B cell (primary cell): ENCODE measurements at regions of chr14 and their contacts with region 1.

Region 1: DNA sequence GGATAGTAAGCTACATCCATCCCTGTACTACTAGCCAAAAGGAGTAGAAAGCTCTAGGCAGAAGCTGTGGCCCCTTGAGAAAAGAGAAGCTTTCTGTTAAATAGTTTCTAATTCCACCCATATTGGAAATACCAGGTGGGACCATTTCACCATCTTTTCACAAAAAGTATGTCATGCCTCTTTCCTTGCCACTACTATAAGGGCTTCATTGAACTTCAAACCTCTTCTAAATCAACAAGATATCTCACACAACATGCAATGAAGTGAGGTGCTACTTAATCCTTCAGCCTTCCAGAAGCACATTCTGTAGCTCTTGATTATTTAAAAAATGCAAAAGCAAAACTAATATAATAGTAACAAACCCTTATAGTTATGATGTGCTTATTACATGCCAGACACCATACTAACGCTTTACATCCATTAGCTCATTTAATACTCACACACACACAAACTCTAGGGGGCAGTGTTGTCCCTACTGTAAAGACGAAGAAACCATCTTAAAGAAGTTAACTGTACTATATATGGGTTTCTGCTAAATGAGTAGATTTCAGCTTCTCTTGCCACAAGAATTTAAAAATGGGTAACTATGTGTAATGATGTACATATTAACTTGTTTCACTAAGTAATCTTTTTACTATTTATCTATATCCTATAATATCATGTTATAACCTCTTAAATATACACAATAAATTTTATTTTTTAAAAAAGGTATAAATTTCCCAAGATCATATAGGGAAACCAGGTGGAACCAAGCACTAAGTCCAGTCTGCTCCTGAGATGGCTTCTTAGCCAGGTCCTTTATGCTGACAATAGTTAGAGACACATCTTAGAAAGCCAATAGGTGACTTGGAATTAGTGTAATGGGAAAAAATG is 124.4 kb downstream of the RPS29 start:
- DNase-seq: peak; percentile 82
- ATAC-seq: peak; percentile 83
- H3K4me3 ChIP-seq: no peak overlapping the region
- H3K4me3 Mint-ChIP-seq: no peak overlapping the region
- H3K27ac ChIP-seq: no peak overlapping the region
- H3K27ac Mint-ChIP-seq: no peak overlapping the region
- H3K4me1 ChIP-seq: no peaks in the 10 kb centered on the region
- H3K4me1 Mint-ChIP-seq: no peaks in the 10 kb centered on the region
- H3K27me3 ChIP-seq: no peaks in the 10 kb centered on the region
- H3K27me3 Mint-ChIP-seq: no peaks in the 10 kb centered on the region
- CTCF ChIP-seq: peak; percentile 81

Region 2: GRCh38 chr14:48430793-48431192 is 1031.0 kb before region 1 on chr14:
- CTCF ChIA-PET with region 1: no interaction called
- POLR2A ChIA-PET with region 1: no interaction called
- intact Hi-C with region 1: no loop called
- DNase-seq: no peak
- ATAC-seq: no peak
- H3K4me3 ChIP-seq: no peak overlapping the region
- H3K4me3 Mint-ChIP-seq: no peak overlapping the region
- H3K27ac ChIP-seq: no peak overlapping the region
- H3K27ac Mint-ChIP-seq: no peak overlapping the region
- H3K4me1 ChIP-seq: no peaks in the 10 kb centered on the region
- H3K4me1 Mint-ChIP-seq: no peaks in the 10 kb centered on the region
- H3K27me3 ChIP-seq: no peaks in the 10 kb centered on the region
- H3K27me3 Mint-ChIP-seq: no peaks in the 10 kb centered on the region
- CTCF ChIP-seq: no peak

Region 3: DNA sequence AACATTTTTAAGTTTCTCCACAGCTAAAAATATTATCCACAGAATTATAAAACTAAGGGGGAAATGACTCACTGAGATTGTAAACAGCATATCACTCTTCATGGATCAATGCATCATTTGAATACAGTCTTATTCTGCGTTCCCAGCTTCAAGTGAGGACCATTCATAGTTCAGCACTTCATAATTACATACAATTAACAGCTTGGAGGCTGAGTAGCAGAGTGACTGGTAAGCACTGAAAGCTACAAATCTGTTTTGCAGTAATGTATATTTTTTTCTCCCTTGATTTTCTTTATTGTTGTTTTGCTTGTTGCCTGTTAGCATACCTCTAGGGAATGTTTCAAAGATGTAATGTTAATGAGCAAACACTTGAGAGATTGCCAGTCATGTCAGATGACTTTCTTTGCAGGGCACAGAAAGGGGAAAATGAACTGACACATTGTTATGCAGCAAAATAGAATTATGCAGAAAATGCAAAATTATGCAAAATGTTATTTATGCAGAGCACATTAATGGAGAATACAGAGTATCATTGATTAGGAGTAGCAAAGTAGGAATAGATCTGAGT is 14.1 kb before region 1 on chr14:
- CTCF ChIA-PET with region 1: interaction called, 14 read pairs
- POLR2A ChIA-PET with region 1: no interaction called
- intact Hi-C with region 1: no loop called
- DNase-seq: no peak
- ATAC-seq: no peak
- H3K4me3 ChIP-seq: no peak overlapping the region
- H3K4me3 Mint-ChIP-seq: no peak overlapping the region
- H3K27ac ChIP-seq: no peak overlapping the region
- H3K27ac Mint-ChIP-seq: no peak overlapping the region
- H3K4me1 ChIP-seq: no peaks in the 10 kb centered on the region
- H3K4me1 Mint-ChIP-seq: no peaks in the 10 kb centered on the region
- H3K27me3 ChIP-seq: peaks cover 0 to 5% (median 2%) of the 10 kb centered on the region in 4 experiments
- H3K27me3 Mint-ChIP-seq: peaks cover 31% of the 10 kb centered on the region
- CTCF ChIP-seq: no peak

Region 4: GRCh38 chr14:49497725-49498348 is 36.1 kb after region 1 on chr14:
- CTCF ChIA-PET with region 1: interaction called, 35 read pairs
- POLR2A ChIA-PET with region 1: no interaction called
- intact Hi-C with region 1: no loop called
- DNase-seq: peak; percentile 72
- ATAC-seq: peak; percentile 76
- H3K4me3 ChIP-seq: no peak overlapping the region
- H3K4me3 Mint-ChIP-seq: no peak overlapping the region
- H3K27ac ChIP-seq: no peak overlapping the region
- H3K27ac Mint-ChIP-seq: no peak overlapping the region
- H3K4me1 ChIP-seq: no peaks in the 10 kb centered on the region
- H3K4me1 Mint-ChIP-seq: no peaks in the 10 kb centered on the region
- H3K27me3 ChIP-seq: peaks cover 0 to 2% (median 0%) of the 10 kb centered on the region in 4 experiments
- H3K27me3 Mint-ChIP-seq: peaks cover 30% of the 10 kb centered on the region
- CTCF ChIP-seq: peak; percentile 99

Region 5: DNA sequence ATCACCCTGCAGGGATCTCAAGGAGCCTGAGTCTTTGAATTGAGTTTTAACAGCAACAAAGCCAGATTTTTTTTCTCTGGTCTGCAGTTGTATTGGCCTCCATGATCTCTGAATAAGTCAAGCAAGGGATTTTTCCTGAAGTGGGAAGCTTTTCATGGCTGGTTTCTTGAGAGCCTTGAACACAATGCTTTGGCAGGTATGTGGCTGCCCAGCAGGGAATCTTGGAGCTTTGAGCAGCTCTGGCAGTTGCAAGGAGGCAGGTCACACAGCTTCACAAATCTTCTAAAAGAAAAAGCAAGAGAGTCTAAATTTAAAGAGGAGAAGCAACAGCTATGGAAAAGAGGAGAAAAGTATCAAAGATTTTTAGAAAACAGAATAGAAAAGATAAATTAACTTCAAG is 64.3 kb after region 1 on chr14:
- CTCF ChIA-PET with region 1: no interaction called
- POLR2A ChIA-PET with region 1: no interaction called
- intact Hi-C with region 1: no loop called
- DNase-seq: no peak
- ATAC-seq: no peak
- H3K4me3 ChIP-seq: no peak overlapping the region
- H3K4me3 Mint-ChIP-seq: no peak overlapping the region
- H3K27ac ChIP-seq: no peak overlapping the region
- H3K27ac Mint-ChIP-seq: no peak overlapping the region
- H3K4me1 ChIP-seq: no peaks in the 10 kb centered on the region
- H3K4me1 Mint-ChIP-seq: no peaks in the 10 kb centered on the region
- H3K27me3 ChIP-seq: peaks cover 0 to 8% (median 0%) of the 10 kb centered on the region in 4 experiments
- H3K27me3 Mint-ChIP-seq: peaks cover 49% of the 10 kb centered on the region
- CTCF ChIP-seq: no peak

Region 6: GRCh38 chr14:49585803-49586672 is 124.3 kb after region 1 on chr14 and contains the start of gene RPS29:
- CTCF ChIA-PET with region 1: interaction called, 8 read pairs
- POLR2A ChIA-PET with region 1: no interaction called
- intact Hi-C with region 1: loop called (anchors 5 kb)
- DNase-seq: peak; percentile 100
- ATAC-seq: peak; percentile 86
- H3K4me3 ChIP-seq: peak within 1 kb of the TSS; percentile 70 to 100 (median 88)
- H3K4me3 Mint-ChIP-seq: peak within 1 kb of the TSS; percentile 88
- H3K27ac ChIP-seq: peak within 1 kb of the TSS; percentile 88 to 95
- H3K27ac Mint-ChIP-seq: peak within 1 kb of the TSS; percentile 100
- H3K4me1 ChIP-seq: peaks cover 17 to 24% of the 10 kb centered on the region in 2 donors
- H3K4me1 Mint-ChIP-seq: peaks cover 46% of the 10 kb centered on the region
- H3K27me3 ChIP-seq: no peaks in the 10 kb centered on the region
- H3K27me3 Mint-ChIP-seq: no peaks in the 10 kb centered on the region
- CTCF ChIP-seq: no peak
- total RNA-seq, gene RPS29: 2,497 and 2,873 TPM in 2 replicates

Region 7: DNA sequence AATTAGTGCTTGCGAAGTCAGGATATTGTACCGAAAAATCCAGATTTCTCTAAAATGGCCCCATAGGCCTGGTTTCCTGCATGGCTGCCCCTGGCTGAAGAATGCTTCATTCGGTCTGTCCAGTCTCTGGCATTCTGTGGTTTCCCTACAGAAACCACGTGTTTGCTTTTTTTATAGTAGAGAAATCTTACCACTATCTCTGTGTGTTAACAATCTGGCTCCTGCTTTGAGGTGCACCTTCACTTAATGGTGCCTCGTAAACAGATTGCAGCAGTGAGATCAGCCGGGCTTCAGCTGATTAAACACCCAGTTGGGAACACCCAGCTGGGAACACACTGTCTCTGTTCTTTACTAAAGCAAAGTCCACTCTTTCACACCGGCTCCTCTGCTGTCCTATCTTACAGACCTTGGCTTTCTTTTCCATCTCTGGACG is 179.9 kb after region 1 on chr14:
- CTCF ChIA-PET with region 1: no interaction called
- POLR2A ChIA-PET with region 1: no interaction called
- intact Hi-C with region 1: no loop called
- DNase-seq: no peak
- ATAC-seq: no peak
- H3K4me3 ChIP-seq: no peak overlapping the region
- H3K4me3 Mint-ChIP-seq: no peak overlapping the region
- H3K27ac ChIP-seq: peak overlapping the region in 1 of 2 donors; percentile 46
- H3K27ac Mint-ChIP-seq: peak overlapping the region; percentile 2
- H3K4me1 ChIP-seq: peaks cover 7 to 16% of the 10 kb centered on the region in 2 donors
- H3K4me1 Mint-ChIP-seq: peaks cover 45% of the 10 kb centered on the region
- H3K27me3 ChIP-seq: no peaks in the 10 kb centered on the region
- H3K27me3 Mint-ChIP-seq: no peaks in the 10 kb centered on the region
- CTCF ChIP-seq: no peak

Region 8: GRCh38 chr14:49828640-49829039 is 366.9 kb after region 1 on chr14:
- CTCF ChIA-PET with region 1: interaction called, 16 read pairs
- POLR2A ChIA-PET with region 1: no interaction called
- intact Hi-C with region 1: loop called (anchors 1 kb)
- DNase-seq: no peak
- ATAC-seq: no peak
- H3K4me3 ChIP-seq: no peak overlapping the region
- H3K4me3 Mint-ChIP-seq: no peak overlapping the region
- H3K27ac ChIP-seq: no peak overlapping the region
- H3K27ac Mint-ChIP-seq: no peak overlapping the region
- H3K4me1 ChIP-seq: no peaks in the 10 kb centered on the region
- H3K4me1 Mint-ChIP-seq: peaks cover 3% of the 10 kb centered on the region
- H3K27me3 ChIP-seq: no peaks in the 10 kb centered on the region
- H3K27me3 Mint-ChIP-seq: no peaks in the 10 kb centered on the region
- CTCF ChIP-seq: no peak

Region 9: DNA sequence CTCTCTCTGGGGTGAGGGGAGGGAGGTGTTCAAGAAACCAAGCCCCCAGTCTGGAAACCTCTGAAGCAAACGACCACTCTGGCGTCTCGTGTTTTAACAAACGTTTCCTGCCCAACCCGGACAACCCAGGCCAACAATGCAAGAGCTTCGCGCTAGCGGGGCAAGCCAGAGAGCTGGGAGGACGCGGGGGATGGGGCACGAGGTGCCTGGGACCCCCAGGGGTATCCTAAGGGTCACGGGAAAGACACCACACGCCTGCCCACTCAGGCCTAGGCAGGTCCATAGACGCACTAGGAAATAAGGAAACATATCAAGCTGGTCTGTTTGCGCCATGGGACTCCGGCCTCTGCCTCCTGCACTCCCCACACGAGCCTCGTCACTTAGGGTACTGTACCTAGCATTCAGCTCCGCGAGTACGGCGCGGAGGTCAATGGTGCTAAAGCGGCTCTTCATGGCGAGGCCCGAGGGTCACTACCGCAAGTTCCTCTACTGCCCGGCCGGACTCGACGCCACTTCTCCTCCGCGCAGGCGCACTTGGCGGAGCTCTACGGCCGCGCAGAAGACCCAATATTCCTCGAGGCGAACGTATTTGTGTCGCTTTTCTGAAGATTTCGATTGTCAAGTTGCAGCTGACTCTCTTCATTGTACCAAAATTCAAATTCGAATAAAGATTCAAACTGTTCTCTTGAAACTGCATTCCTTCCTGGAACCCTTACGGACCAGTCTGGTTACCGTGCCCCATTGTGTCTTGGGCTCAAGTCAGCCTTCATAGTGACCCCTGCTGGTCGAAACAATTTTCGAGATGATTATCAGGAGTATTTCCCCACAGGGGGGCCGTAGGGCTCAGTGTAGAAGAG is 390.8 kb after region 1 on chr14 and contains the start of gene NEMF:
- CTCF ChIA-PET with region 1: interaction called, 14 read pairs
- POLR2A ChIA-PET with region 1: no interaction called
- intact Hi-C with region 1: no loop called
- DNase-seq: peak; percentile 94
- ATAC-seq: peak; percentile 84
- H3K4me3 ChIP-seq: peak within 1 kb of the TSS; percentile 78 to 99 (median 99)
- H3K4me3 Mint-ChIP-seq: peak within 1 kb of the TSS; percentile 98
- H3K27ac ChIP-seq: peak within 1 kb of the TSS; percentile 72 to 88
- H3K27ac Mint-ChIP-seq: peak within 1 kb of the TSS; percentile 98
- H3K4me1 ChIP-seq: peaks cover 20 to 31% of the 10 kb centered on the region in 2 donors
- H3K4me1 Mint-ChIP-seq: peaks cover 44% of the 10 kb centered on the region
- H3K27me3 ChIP-seq: no peaks in the 10 kb centered on the region
- H3K27me3 Mint-ChIP-seq: no peaks in the 10 kb centered on the region
- CTCF ChIP-seq: peak; percentile 86
- total RNA-seq, gene NEMF: 127 and 146 TPM in 2 replicates

Region 10: GRCh38 chr14:51104467-51104866 is 1642.7 kb after region 1 on chr14:
- CTCF ChIA-PET with region 1: no interaction called
- POLR2A ChIA-PET with region 1: no interaction called
- intact Hi-C with region 1: no loop called
- DNase-seq: no peak
- ATAC-seq: no peak
- H3K4me3 ChIP-seq: no peak overlapping the region
- H3K4me3 Mint-ChIP-seq: no peak overlapping the region
- H3K27ac ChIP-seq: no peak overlapping the region
- H3K27ac Mint-ChIP-seq: no peak overlapping the region
- H3K4me1 ChIP-seq: peaks cover 0 to 4% of the 10 kb centered on the region in 2 donors
- H3K4me1 Mint-ChIP-seq: peaks cover 3% of the 10 kb centered on the region
- H3K27me3 ChIP-seq: peaks cover 0 to 10% (median 3%) of the 10 kb centered on the region in 4 experiments
- H3K27me3 Mint-ChIP-seq: peaks cover 29% of the 10 kb centered on the region
- CTCF ChIP-seq: no peak